H1 (cell line): ENCODE measurements at regions of chr14 and their contacts with region 1.

Region 1: GRCh38 chr14:20530771-20531571 is 25.6 kb downstream of the RNASE10 start:
- DNase-seq: peak; percentile 41 to 83
- H3K4me3 ChIP-seq: no peak overlapping the region
- H3K27ac ChIP-seq: no peak overlapping the region
- H3K4me1 ChIP-seq: no peaks in the 10 kb centered on the region
- H3K27me3 ChIP-seq: no peaks in the 10 kb centered on the region
- CTCF ChIP-seq: peak; percentile 20 to 78 (median 68)
- EP300 ChIP-seq: no peak
- POLR2A ChIP-seq: no peak
- RAD21 ChIP-seq: peak; percentile 60 to 71

Region 2: GRCh38 chr14:20489093-20489994 is 41.6 kb before region 1 on chr14:
- CTCF ChIA-PET with region 1: interaction called, 13 read pairs
- POLR2A ChIA-PET with region 1: no interaction called
- DNase-seq: no peak
- H3K4me3 ChIP-seq: no peak overlapping the region
- H3K27ac ChIP-seq: no peak overlapping the region
- H3K4me1 ChIP-seq: peaks cover 0 to 8% (median 3%) of the 10 kb centered on the region in 4 experiments; a peak in 2 of 7 replicates
- H3K27me3 ChIP-seq: no peaks in the 10 kb centered on the region
- CTCF ChIP-seq: no peak
- EP300 ChIP-seq: no peak
- POLR2A ChIP-seq: no peak
- RAD21 ChIP-seq: no peak

Region 3: DNA sequence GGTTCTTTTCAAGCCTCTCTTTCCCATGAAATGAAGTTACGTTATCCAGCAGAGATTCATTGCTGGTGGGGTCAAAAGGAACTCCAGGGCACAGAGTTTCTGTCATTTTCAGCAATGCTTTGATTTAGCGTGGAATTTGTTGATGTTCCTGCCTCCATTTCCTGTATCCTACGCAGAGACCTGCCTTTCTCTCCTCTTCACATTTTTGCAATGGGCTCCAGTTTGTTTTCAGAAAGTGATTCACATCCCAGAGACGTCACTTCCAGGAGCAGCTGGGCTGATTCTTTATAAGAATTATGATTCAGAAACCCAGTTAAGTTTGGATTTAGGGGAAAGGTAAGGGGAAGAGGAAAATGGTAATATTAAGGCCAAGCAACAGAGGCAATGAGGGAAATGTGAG is 14.1 kb before region 1 on chr14:
- CTCF ChIA-PET with region 1: interaction called, 20 read pairs
- POLR2A ChIA-PET with region 1: no interaction called
- DNase-seq: no peak
- H3K4me3 ChIP-seq: no peak overlapping the region
- H3K27ac ChIP-seq: no peak overlapping the region
- H3K4me1 ChIP-seq: peaks cover 0 to 2% (median 0%) of the 10 kb centered on the region in 4 experiments; a peak in 1 of 7 replicates
- H3K27me3 ChIP-seq: no peaks in the 10 kb centered on the region
- CTCF ChIP-seq: no peak
- EP300 ChIP-seq: no peak
- POLR2A ChIP-seq: no peak
- RAD21 ChIP-seq: no peak